Activated B cell treated with CpG ODN at 0.5 μM for 24 hours (primary cell): ENCODE measurements at regions of chr1 and their contacts with region 1.

Region 1: GRCh38 chr1:109263597-109264398 is 14.5 kb downstream of the CELSR2 start:
- DNase-seq: peak; percentile 63
- ATAC-seq: peak; percentile 97
- H3K4me3 Mint-ChIP-seq: no peak overlapping the region
- H3K27ac Mint-ChIP-seq: no peak overlapping the region
- H3K4me1 Mint-ChIP-seq: peaks cover 4% of the 10 kb centered on the region
- H3K27me3 Mint-ChIP-seq: peaks cover 2% of the 10 kb centered on the region
- CTCF ChIP-seq: no peak

Region 2: DNA sequence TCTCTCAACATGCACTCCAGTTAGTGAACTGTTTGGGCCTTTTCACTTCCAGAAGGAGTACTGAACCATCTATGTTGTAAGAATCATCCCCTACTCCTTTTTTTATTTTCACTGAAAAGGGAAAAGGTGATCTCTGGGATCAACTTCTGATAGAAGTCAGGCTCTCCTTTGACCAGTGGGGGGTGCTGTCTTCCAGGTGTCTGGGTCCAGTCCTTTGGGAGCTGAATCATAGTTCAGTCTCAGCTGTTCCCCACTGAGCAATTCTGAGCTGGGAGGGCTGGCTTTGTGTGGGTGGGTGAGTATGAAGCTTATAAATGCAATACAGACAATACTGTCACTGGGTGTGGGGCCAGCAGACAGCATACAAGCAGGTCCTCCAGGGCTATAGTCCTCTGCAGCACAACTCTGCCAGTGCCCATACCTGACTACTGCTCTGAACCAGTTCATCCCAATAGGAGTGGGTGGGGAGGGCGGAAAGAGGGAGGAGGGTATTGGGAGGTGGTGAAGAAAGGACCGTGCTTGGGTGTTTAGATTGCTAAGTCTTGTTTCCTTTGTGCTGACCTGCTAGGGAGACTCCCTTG is 62.6 kb before region 1 on chr1:
- CTCF ChIA-PET with region 1: no interaction called
- POLR2A ChIA-PET with region 1: no interaction called
- intact Hi-C with region 1: loop called (anchors 1 kb)
- DNase-seq: no peak
- ATAC-seq: peak; percentile 69
- H3K4me3 Mint-ChIP-seq: no peak overlapping the region
- H3K27ac Mint-ChIP-seq: no peak overlapping the region
- H3K4me1 Mint-ChIP-seq: peaks cover 9% of the 10 kb centered on the region
- H3K27me3 Mint-ChIP-seq: no peaks in the 10 kb centered on the region
- CTCF ChIP-seq: no peak

Region 3: GRCh38 chr1:109312978-109313775 is 49.4 kb after region 1 on chr1:
- CTCF ChIA-PET with region 1: no interaction called
- POLR2A ChIA-PET with region 1: no interaction called
- intact Hi-C with region 1: no loop called
- DNase-seq: no peak
- ATAC-seq: no peak
- H3K4me3 Mint-ChIP-seq: no peak overlapping the region
- H3K27ac Mint-ChIP-seq: no peak overlapping the region
- H3K4me1 Mint-ChIP-seq: peaks cover 2% of the 10 kb centered on the region
- H3K27me3 Mint-ChIP-seq: peaks cover 3% of the 10 kb centered on the region
- CTCF ChIP-seq: no peak